Naive thymus-derived CD4-positive, alpha-beta T cell (primary cell): ENCODE measurements at regions of chr4 and their contacts with region 1.

Region 1: GRCh38 chr4:185134307-185134869 is 8.7 kb upstream of the SLC25A4 start:
- DNase-seq: peak in 6 of 9 donors; percentile 22 to 52 (median 40)
- ATAC-seq: peak; percentile 86
- H3K4me3 ChIP-seq: no peak overlapping the region
- H3K4me3 Mint-ChIP-seq: no peak overlapping the region
- H3K27ac ChIP-seq: no peak overlapping the region
- H3K27ac Mint-ChIP-seq: no peak overlapping the region
- H3K4me1 ChIP-seq: no peaks in the 10 kb centered on the region
- H3K4me1 Mint-ChIP-seq: no peaks in the 10 kb centered on the region
- H3K27me3 ChIP-seq: peaks cover 0 to 3% of the 10 kb centered on the region in 2 donors
- H3K27me3 Mint-ChIP-seq: peaks cover 29 to 68% (median 40%) of the 10 kb centered on the region in 5 donors

Region 2: DNA sequence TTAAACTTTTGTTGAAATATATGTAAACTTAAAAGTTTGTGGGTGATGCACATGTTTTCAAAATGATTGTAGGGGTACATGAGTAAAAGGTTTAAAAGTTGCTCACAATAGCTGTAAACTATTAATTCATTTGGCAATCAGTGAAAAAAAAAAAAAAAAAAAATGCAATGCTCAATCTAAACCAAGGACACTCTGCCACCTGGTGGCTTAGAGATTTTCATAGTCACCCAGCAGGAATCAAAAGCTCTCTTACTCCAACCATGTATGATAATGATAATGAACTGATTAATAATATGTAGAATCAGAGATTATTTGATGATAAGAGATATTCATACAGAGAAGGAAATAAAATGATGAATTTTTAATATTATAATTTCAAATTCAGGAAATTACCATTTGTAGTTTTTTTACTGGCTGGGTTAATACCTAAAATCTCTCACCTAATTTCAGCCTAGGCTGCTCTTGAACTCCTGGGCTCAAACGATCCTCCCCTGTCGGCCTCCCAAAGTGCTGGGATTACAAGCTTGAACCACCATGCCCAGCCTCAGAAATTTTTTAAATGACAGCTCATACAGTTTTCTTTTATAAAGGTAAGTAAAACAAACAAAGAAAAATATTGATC is 38.2 kb before region 1 on chr4:
- CTCF ChIA-PET with region 1: no interaction called
- POLR2A ChIA-PET with region 1: no interaction called
- intact Hi-C with region 1: loop called in 1 of 2 experiments (anchors 1 kb)
- DNase-seq: peak in 6 of 9 donors; percentile 16 to 39 (median 27)
- ATAC-seq: peak; percentile 27
- H3K4me3 ChIP-seq: no peak overlapping the region
- H3K4me3 Mint-ChIP-seq: no peak overlapping the region
- H3K27ac ChIP-seq: no peak overlapping the region
- H3K27ac Mint-ChIP-seq: no peak overlapping the region
- H3K4me1 ChIP-seq: no peaks in the 10 kb centered on the region
- H3K4me1 Mint-ChIP-seq: no peaks in the 10 kb centered on the region
- H3K27me3 ChIP-seq: no peaks in the 10 kb centered on the region
- H3K27me3 Mint-ChIP-seq: peaks cover 9 to 30% (median 14%) of the 10 kb centered on the region in 5 donors

Region 3: GRCh38 chr4:185304944-185305690 is 170.7 kb after region 1 on chr4:
- CTCF ChIA-PET with region 1: no interaction called
- POLR2A ChIA-PET with region 1: no interaction called
- intact Hi-C with region 1: loop called in 1 of 2 experiments (anchors 1 kb)
- DNase-seq: peak in 7 of 9 donors; percentile 0 to 44 (median 36)
- ATAC-seq: peak; percentile 59
- H3K4me3 ChIP-seq: no peak overlapping the region
- H3K4me3 Mint-ChIP-seq: no peak overlapping the region
- H3K27ac ChIP-seq: no peak overlapping the region
- H3K27ac Mint-ChIP-seq: peak overlapping the region in 2 of 9 donors; percentile 25 to 75
- H3K4me1 ChIP-seq: no peaks in the 10 kb centered on the region
- H3K4me1 Mint-ChIP-seq: peaks cover 0 to 15% (median 0%) of the 10 kb centered on the region in 7 donors
- H3K27me3 ChIP-seq: no peaks in the 10 kb centered on the region
- H3K27me3 Mint-ChIP-seq: no peaks in the 10 kb centered on the region